Activated CD4-positive, alpha-beta T cell treated with anti-CD3 and anti-CD28 coated beads for 36 hours (primary cell): ENCODE measurements at regions of chr7 and their contacts with region 1.

Region 1: DNA sequence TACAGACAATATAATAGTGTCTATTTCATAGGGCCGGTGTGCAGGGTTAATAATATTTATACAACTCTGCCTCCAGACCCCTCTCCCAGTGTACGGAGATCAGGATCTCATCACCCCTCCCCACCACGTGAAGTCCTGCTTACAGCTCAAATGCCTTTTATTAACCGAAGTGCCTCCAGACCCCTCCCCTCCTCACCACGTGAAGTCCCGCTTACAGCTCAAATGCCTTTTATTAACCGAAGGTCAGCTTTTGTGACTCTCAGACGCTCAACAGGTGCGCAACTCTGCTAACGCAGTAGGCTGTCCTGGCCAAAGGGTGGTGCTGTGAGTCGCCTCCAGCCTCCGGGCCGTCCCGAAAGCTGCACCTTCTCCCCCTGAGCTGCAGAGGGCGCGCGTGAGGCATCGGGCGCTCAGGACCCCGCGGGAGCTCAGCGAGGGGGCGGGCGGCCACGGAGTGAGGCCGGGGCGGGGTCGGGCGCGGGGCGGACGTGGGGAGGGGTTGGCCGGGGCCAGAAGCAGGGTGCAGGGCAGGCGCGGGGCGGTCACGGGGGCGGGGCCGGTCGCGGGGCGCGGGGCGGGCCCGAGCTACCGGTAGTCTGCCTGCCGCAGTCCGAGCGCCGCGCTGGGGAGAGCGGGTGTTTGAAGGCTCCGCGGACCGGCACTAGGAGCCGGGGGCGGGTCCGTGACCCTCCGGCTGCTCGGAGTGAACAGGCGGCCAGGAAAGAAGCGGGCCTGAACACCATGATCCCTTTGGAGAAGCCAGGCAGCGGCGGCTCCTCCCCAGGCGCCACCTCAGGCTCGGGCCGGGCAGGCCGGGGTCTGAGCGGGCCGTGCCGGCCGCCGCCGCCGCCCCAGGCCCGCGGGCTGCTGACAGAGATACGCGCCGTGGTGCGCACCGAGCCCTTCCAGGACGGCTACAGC is at the start of gene STK17A:
- DNase-seq: peak; percentile 96
- ATAC-seq: peak; percentile 77
- H3K4me3 Mint-ChIP-seq: peak within 1 kb of the TSS; percentile 99
- H3K27ac Mint-ChIP-seq: peak within 1 kb of the TSS; percentile 97
- H3K4me1 Mint-ChIP-seq: peaks cover 29% of the 10 kb centered on the region
- H3K27me3 Mint-ChIP-seq: peaks cover 6% of the 10 kb centered on the region
- total RNA-seq, gene STK17A: 43.2 to 50.9 TPM

Region 2: DNA sequence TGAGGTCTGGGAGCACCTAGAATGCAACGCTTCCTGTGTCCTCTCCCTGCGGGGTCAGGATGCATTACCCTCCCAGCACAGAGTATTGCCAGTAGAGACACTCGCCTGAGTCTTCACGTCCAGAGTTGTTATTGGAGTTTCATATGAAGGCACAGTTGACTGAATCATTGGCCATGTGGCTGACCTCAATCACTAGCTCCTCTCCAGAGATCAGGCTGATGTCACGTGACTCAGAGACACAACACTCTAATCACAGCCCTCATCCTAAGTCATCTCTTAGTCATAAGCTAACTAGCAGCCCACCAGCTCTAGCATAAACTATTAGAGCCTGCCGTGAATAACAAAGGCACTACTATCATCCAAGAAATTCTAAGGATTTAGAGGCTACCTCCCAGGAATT is 362.5 kb before region 1 on chr7:
- CTCF ChIA-PET with region 1: no interaction called
- POLR2A ChIA-PET with region 1: no interaction called
- intact Hi-C with region 1: no loop called
- DNase-seq: no peak
- ATAC-seq: peak; percentile 23
- H3K4me3 Mint-ChIP-seq: no peak overlapping the region
- H3K27ac Mint-ChIP-seq: no peak overlapping the region
- H3K4me1 Mint-ChIP-seq: no peaks in the 10 kb centered on the region
- H3K27me3 Mint-ChIP-seq: peaks cover 16% of the 10 kb centered on the region

Region 3: DNA sequence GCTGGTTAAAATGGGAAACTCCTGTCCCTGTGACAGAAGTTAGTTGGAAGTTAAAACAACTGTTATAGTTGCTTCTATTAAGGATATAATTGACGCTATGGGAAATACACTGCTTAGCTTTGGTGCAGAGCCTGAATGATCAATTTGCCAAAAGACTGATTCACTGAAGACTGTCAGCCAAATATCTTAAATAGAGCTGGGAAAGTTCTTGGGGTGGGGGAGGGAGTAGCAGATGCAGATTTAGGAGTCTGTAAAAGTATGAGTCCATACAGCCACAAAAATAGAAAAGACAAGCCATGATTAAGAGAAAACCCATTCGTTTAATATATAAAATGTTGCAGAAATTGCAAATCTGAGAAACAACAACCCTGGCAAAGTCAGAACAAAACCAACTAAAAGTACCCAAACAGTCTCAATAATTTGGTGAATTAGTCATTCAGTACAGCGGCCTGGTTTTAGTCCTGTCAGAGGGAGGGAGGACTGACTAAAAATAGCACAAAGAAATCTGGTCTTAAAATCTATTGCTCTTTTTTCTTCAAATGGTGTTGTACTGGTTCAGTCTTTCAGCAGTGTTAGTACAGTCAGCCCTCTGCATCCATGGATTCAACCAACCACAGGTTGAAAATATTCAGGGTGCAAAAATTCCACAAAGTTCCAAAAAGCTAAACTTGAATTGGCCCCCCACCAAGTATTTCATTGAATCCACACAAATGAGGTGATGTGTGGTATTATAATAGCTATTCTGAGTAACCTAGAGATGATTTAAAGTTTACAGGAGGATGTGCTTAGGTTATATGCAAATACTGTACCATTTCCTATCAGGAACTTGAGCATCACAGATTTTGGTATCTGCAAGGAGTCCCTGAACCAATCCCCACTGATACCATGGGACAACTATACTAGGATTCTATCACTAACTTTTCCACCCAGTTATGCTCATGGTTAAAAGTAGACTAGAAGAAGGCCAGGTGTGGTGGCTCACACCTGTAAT is 30.1 kb after region 1 on chr7:
- CTCF ChIA-PET with region 1: interaction called, 45 read pairs
- POLR2A ChIA-PET with region 1: interaction called, 6 read pairs
- intact Hi-C with region 1: no loop called
- DNase-seq: peak; percentile 33
- ATAC-seq: peak; percentile 86
- H3K4me3 Mint-ChIP-seq: peak overlapping the region; percentile 10
- H3K27ac Mint-ChIP-seq: peak overlapping the region; percentile 87
- H3K4me1 Mint-ChIP-seq: peaks cover 73% of the 10 kb centered on the region
- H3K27me3 Mint-ChIP-seq: no peaks in the 10 kb centered on the region

Region 4: DNA sequence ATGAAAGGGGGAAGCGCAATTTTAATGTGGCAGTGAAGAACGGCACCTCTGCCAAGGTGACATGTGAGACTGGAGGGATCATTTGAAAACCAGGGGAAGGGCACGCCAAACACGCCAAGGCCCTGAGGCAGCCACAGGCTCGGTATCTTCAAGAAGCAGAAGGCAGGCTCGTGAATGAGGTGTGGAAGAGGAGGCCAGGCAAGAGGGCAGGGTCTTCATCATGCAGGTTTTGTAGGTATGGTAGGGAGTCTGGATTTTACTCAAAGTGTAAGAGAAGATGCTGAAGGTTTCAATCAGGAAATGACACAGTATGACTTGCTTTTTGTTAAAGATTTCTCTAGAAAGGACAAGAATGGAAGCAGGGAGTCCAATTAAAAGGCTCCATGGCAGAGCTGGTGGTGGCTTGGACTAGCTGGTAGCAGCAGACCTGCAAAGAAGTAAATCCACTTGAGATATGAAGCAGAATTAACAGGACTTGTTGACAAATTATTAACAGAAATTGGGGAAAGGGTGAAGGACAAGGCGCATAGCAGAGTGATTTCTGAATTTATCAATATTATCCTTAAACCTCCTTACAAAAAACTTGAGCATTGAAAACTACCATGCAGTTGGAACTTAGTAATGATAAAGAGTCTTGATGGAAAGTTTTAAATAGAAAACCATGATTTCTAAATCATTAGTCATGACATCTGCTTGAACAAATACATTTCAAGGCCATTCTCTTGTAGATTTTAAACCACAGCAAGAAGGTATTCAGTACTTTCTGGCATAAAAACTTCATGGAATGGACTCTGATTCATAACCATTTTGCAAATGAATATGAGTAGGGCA is 76.2 kb after region 1 on chr7:
- CTCF ChIA-PET with region 1: interaction called, 4 read pairs
- POLR2A ChIA-PET with region 1: interaction called, 4 read pairs
- intact Hi-C with region 1: loop called in 1 of 2 experiments (anchors 2 kb)
- DNase-seq: peak; percentile 73
- ATAC-seq: peak; percentile 98
- H3K4me3 Mint-ChIP-seq: peak overlapping the region; percentile 34
- H3K27ac Mint-ChIP-seq: peak overlapping the region; percentile 96
- H3K4me1 Mint-ChIP-seq: peaks cover 70% of the 10 kb centered on the region
- H3K27me3 Mint-ChIP-seq: no peaks in the 10 kb centered on the region

Region 5: DNA sequence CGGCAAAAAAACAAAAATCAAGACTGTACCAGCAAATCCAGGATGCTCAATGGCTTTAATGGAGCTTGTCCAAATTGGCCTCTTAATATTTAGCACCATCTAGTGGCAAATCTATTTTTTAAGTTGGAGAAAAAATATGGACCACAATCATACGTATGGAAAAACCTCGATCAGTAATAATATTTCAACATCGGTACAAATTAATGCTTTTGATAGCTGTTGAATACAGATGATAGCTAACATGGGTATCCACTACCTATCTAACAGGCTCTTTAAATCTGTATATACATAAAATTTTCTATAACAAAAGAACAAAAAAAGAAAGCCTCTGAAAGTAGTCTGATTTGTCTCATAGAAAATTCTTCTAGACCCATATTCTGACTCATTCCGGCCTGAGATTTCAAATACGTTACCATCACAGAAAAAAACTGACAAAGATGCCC is 117.3 kb after region 1 on chr7:
- CTCF ChIA-PET with region 1: interaction called, 381 read pairs
- POLR2A ChIA-PET with region 1: interaction called, 37 read pairs
- intact Hi-C with region 1: loop called (anchors 1 kb)
- DNase-seq: no peak
- ATAC-seq: peak; percentile 42
- H3K4me3 Mint-ChIP-seq: no peak overlapping the region
- H3K27ac Mint-ChIP-seq: no peak overlapping the region
- H3K4me1 Mint-ChIP-seq: peaks cover 56% of the 10 kb centered on the region
- H3K27me3 Mint-ChIP-seq: no peaks in the 10 kb centered on the region

Region 6: DNA sequence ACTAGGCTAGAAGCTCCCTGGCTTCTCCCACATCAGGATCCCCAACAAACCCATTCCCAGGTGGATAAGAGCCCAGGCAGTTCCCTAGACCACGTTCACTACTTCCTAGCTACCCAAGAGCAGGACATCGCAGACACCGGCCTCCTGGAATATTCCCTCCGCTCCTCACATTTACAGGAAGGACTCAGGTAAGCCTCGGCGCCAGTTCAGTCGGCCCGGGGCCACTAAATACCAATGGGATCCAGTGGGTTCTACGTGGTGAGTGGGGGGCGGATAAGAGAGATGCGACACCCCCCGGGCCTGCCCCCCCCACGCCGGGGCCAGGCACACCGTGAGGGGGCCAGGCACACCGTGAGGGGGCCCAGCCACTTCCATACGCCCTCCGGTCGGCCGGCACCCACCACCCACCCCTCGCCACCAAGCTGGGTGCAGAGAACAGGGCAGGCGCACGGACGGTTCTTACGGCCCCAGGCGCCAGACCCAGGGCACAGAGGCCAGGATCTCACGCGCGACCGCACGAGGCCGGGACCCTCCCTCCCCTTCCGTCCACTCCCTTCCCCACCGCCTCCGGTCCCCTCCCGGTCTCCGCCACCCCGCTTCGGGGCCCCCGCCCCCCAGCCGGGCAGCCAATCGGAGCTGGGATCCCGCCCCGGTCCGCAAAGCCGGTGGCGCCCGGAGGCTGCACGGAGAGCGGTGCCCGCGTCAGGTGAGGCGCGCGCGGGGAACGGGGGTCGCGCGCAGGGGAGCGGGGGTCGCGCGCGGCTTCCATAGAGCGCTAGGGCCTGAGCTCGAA is 175.5 kb after region 1 on chr7 and contains the start of gene BLVRA:
- CTCF ChIA-PET with region 1: interaction called, 6 read pairs
- POLR2A ChIA-PET with region 1: interaction called, 6 read pairs
- intact Hi-C with region 1: loop called in 1 of 2 experiments (anchors 1 kb)
- DNase-seq: peak; percentile 73
- ATAC-seq: peak; percentile 70
- H3K4me3 Mint-ChIP-seq: peak within 1 kb of the TSS; percentile 74
- H3K27ac Mint-ChIP-seq: peak within 1 kb of the TSS; percentile 53
- H3K4me1 Mint-ChIP-seq: peaks cover 42% of the 10 kb centered on the region
- H3K27me3 Mint-ChIP-seq: peaks cover 16% of the 10 kb centered on the region
- total RNA-seq, gene BLVRA: 16.0 to 31.2 TPM

Region 7: GRCh38 chr7:43869006-43869866 is 286.5 kb after region 1 on chr7 and contains the start of gene MRPS24:
- CTCF ChIA-PET with region 1: interaction called, 7 read pairs
- POLR2A ChIA-PET with region 1: no interaction called
- intact Hi-C with region 1: loop called in 1 of 2 experiments (anchors 1 kb)
- DNase-seq: peak; percentile 98
- ATAC-seq: peak; percentile 96
- H3K4me3 Mint-ChIP-seq: peak within 1 kb of the TSS; percentile 83
- H3K27ac Mint-ChIP-seq: peak within 1 kb of the TSS; percentile 84
- H3K4me1 Mint-ChIP-seq: peaks cover 35% of the 10 kb centered on the region
- H3K27me3 Mint-ChIP-seq: no peaks in the 10 kb centered on the region
- total RNA-seq, gene MRPS24: 121 to 149 TPM